ENCODE measurements at regions of chr17 and their contacts with region 1.

Region 1: DNA sequence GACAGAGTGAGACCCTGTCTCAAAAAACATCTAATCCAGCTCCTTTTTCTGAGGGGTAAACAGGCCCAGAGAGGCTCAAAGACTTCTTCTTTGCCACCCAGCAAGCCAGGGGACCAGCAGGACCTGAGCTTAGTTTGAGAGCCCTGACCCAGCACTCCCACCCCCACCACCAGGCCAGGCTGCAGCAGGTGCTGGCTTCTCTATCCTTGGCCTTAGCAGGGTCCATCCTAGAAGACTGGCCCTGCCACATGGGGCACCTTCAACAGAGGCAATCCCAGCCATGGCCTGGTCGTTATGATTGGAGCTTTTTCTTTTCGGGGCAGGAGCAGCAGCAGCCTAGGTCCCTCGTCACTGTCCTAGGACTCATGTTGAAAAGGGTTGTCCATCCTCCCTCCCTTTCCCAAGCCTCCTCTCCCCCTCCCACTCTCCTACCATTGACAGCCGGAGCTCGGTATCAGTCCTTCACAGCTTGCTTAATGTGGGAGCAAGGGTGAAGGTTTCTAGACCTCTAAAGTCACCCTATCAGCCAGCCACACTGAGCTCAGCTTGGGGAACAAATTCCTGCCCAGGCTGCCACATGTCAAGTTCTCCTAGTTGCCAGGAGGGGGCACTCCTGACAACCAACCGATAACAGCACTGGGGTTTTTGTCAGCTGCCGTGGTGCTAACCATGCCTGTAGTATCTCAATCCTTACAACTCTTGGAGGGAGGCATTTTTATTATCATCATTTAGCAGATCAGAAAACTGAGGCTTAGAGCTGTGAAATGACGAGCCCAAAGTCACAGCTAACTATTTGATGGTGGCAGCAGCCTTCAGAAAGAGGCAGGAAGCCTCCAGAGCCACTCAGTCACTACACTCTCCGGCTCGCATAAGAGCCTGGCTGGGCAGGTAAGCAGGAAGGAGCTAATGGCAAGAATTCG is 11.2 kb downstream of the MRPL27 start:
- DNase-seq: peak; percentile 61
- ATAC-seq: peak; percentile 43
- H3K4me3 Mint-ChIP-seq: no peak overlapping the region
- H3K27ac Mint-ChIP-seq: peak overlapping the region; percentile 91; the same call in 1 of the 2 replicates
- H3K4me1 Mint-ChIP-seq: peaks cover 36% of the 10 kb centered on the region
- H3K27me3 Mint-ChIP-seq: no peaks in the 10 kb centered on the region
- CTCF ChIP-seq: peak; percentile 60

Region 2: GRCh38 chr17:50331085-50331791 is 30.6 kb before region 1 on chr17:
- CTCF ChIA-PET with region 1: interaction called, 12 read pairs
- POLR2A ChIA-PET with region 1: no interaction called
- DNase-seq: no peak
- ATAC-seq: no peak
- H3K4me3 Mint-ChIP-seq: no peak overlapping the region
- H3K27ac Mint-ChIP-seq: no peak overlapping the region
- H3K4me1 Mint-ChIP-seq: peaks cover 17% of the 10 kb centered on the region
- H3K27me3 Mint-ChIP-seq: no peaks in the 10 kb centered on the region
- CTCF ChIP-seq: no peak

Region 3: GRCh38 chr17:50345432-50346312 is 16.1 kb before region 1 on chr17 and contains the start of gene XYLT2:
- CTCF ChIA-PET with region 1: interaction called, 31 read pairs
- POLR2A ChIA-PET with region 1: interaction called, 7 read pairs
- DNase-seq: peak; percentile 82
- ATAC-seq: peak; percentile 66
- H3K4me3 Mint-ChIP-seq: peak within 1 kb of the TSS; percentile 93
- H3K27ac Mint-ChIP-seq: peak within 1 kb of the TSS; percentile 57; the same call in 1 of the 2 replicates
- H3K4me1 Mint-ChIP-seq: peaks cover 32% of the 10 kb centered on the region
- H3K27me3 Mint-ChIP-seq: peaks cover 14% of the 10 kb centered on the region
- CTCF ChIP-seq: no peak
- total RNA-seq, gene XYLT2: 35.7 to 39.7 TPM (median 37.9 TPM) in 3 replicates

Region 4: DNA sequence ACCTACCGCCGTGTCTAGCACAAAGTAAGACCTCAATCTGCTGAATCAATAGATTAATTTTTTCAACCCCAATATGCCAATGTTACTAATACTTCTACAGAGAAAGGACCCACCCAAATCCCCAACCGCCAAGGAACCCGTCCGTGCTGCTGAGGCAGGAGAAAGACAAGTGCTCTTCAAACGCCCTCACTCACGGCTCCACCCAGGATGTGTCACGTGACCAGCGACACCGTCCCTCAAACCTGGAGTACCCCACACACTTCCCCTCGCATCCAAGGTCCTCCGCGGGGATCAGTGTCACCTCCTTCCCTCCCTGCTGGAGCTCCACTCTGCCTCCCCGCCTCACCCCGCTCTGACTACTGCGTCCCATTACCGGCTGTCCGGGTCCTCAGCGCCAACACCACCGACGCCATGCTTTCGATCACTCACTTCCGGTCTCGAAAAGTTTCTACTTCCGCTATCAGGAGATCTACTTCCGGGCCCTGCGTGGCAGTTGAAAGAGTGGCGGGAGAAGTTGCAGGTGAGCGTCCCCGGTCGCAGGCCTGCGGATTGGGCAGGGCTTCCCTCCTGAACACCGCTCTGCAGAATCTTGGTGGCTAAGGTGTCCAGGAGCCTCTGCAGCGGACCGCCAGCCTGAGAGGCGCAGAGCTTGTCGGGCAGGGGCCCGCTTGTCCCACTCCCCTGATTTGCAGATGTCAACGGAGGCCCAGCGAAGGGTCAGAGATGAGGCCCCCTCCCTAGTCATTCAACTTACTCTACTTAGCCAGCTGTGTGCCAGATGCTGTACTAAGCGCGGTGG is 11.1 kb after region 1 on chr17 and contains the starts of genes EME1 and MRPL27:
- CTCF ChIA-PET with region 1: interaction called, 16 read pairs
- POLR2A ChIA-PET with region 1: no interaction called
- DNase-seq: peak; percentile 74
- ATAC-seq: peak; percentile 84
- H3K4me3 Mint-ChIP-seq: peak within 1 kb of the TSS; percentile 99
- H3K27ac Mint-ChIP-seq: peak within 1 kb of the TSS; percentile 99
- H3K4me1 Mint-ChIP-seq: peaks cover 22% of the 10 kb centered on the region
- H3K27me3 Mint-ChIP-seq: no peaks in the 10 kb centered on the region
- CTCF ChIP-seq: no peak
- total RNA-seq, gene EME1: 22.8 to 27.1 TPM (median 24.9 TPM) in 3 replicates
- total RNA-seq, gene MRPL27: 66.7 to 80.5 TPM (median 69.8 TPM) in 3 replicates

Region 5: GRCh38 chr17:50380369-50381259 is 18.8 kb after region 1 on chr17:
- CTCF ChIA-PET with region 1: interaction called, 13 read pairs
- POLR2A ChIA-PET with region 1: interaction called, 3 read pairs
- DNase-seq: no peak
- ATAC-seq: peak; percentile 28; the same call in 1 of the 2 replicates
- H3K4me3 Mint-ChIP-seq: no peak overlapping the region
- H3K27ac Mint-ChIP-seq: no peak overlapping the region
- H3K4me1 Mint-ChIP-seq: no peaks in the 10 kb centered on the region
- H3K27me3 Mint-ChIP-seq: no peaks in the 10 kb centered on the region; the same call in 1 of the 2 replicates
- CTCF ChIP-seq: no peak